ENCODE measurements at regions of chr4 and their contacts with region 1.

Region 1: DNA sequence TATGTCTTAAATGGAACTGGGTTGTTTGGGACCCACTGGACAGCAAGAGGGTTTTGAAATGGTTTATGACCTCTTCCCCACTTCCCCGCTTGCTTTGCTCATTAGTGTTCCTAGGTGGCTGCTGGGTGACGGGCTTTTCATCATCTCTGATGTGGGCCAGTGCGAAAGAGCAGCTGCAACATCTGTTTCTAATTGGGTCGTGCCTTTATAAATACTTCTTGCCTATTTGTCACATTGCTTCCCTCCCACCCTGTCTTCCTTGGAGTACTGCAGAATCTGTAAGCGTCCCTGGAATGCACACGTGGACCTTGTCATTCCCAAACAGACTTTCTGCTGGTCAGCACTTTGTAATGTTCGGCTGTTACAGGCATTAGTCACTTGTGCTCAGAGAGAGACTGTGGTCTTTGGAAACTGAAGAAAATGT is 35.2 kb downstream of the SEPTIN11 start:
- DNase-seq: no peak
- H3K4me3 Mint-ChIP-seq: no peak overlapping the region
- H3K27ac Mint-ChIP-seq: no peak overlapping the region
- H3K4me1 Mint-ChIP-seq: peaks cover 42% of the 10 kb centered on the region
- H3K27me3 Mint-ChIP-seq: peaks cover 72% of the 10 kb centered on the region

Region 2: GRCh38 chr4:76949276-76950051 is 35.3 kb before region 1 on chr4 and contains the start of gene SEPTIN11:
- intact Hi-C with region 1: loop called (anchors 5 kb)
- DNase-seq: peak; percentile 42
- H3K4me3 Mint-ChIP-seq: peak within 1 kb of the TSS; percentile 70
- H3K27ac Mint-ChIP-seq: no peak within 1 kb of the TSS
- H3K4me1 Mint-ChIP-seq: peaks cover 8% of the 10 kb centered on the region
- H3K27me3 Mint-ChIP-seq: peaks cover 79% of the 10 kb centered on the region
- total RNA-seq, gene SEPTIN11: 7.9 and 9.2 TPM in 2 replicates

Region 3: DNA sequence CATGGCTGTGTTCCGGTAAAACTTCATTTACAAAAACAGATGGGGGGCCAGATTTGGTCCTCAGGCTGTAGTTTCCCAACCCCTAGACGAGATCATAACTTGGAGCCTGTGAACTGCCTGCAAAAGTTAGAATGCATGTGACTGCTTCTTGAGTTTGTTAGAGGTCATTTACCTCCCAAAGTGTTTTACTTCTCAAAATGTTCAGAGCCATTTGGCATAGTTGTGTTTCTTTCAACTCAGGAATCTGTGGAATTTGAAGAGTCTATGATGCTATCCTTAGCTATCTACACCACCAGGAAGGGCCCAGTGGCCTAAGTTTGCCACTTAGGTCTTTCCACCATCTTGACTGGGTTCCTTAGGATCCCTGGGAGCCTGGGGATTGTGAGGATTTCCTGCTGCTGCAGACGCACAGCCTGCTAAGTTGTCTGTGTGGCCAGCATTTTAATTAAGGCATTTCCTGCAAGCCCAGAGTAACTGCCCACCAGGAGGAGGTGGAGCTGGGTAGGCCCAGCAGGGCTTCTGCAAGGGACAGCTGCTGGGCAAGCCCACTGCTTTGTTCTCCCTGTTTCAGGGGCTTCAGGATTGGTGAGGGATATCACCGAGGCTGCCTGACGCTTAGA is 37.9 kb after region 1 on chr4:
- intact Hi-C with region 1: loop called (anchors 1 kb)
- DNase-seq: no peak
- H3K4me3 Mint-ChIP-seq: no peak overlapping the region
- H3K27ac Mint-ChIP-seq: no peak overlapping the region
- H3K4me1 Mint-ChIP-seq: peaks cover 23% of the 10 kb centered on the region
- H3K27me3 Mint-ChIP-seq: peaks cover 43% of the 10 kb centered on the region

Region 4: DNA sequence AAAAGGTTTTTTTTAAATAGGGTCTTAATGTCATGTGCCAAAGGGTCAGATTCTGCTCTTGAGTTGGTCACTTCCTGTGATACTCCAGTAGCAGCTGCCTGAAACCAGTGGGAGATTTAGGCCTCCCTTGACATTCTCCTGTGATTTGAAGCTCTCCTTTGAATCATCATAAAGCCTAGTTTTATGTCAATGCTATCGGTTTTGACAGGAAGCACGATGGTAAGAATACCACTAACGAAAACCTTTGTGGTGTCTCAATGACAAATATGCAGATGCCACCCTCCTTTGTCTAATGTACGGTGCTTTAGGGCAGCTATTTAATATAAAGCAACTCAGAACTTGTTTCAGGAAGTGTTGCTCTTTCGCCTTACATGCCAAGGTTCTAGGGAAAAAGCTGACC is 46.7 kb after region 1 on chr4:
- intact Hi-C with region 1: loop called (anchors 1 kb)
- DNase-seq: no peak
- H3K4me3 Mint-ChIP-seq: no peak overlapping the region
- H3K27ac Mint-ChIP-seq: no peak overlapping the region
- H3K4me1 Mint-ChIP-seq: peaks cover 40% of the 10 kb centered on the region
- H3K27me3 Mint-ChIP-seq: peaks cover 47% of the 10 kb centered on the region

Region 5: DNA sequence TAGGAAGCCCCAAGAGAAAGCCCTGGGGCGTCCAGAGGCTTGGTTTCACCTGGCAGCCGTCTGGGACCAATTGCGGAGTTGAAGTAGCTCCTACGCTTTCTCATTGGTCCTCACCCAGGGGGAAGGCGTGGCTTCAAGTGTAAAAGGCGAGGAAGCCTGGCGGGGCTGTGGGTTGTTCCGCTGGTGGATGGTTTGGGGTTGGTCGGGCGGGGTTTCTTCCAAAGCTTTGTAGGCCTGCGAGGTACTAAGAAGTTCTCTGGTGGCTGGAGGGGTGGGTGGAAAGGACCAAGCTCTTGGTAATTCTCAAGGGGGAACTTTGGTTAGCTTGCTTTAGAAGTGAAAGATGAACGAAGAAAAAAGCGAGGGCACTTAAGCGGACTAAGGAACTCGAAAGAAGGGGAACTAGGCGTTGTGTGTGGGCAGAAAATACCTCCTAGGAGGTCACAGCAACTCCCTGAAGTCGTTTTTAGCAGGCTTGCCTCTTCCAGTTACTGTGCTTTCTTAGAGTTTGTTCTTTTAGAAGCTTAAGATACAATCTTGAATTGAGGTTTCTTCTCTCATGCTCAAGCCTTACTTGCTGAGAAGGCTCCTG is 208.8 kb after region 1 on chr4:
- intact Hi-C with region 1: loop called (anchors 5 kb)
- DNase-seq: peak; percentile 77
- H3K4me3 Mint-ChIP-seq: peak overlapping the region; percentile 81
- H3K27ac Mint-ChIP-seq: peak overlapping the region; percentile 97
- H3K4me1 Mint-ChIP-seq: peaks cover 47% of the 10 kb centered on the region
- H3K27me3 Mint-ChIP-seq: peaks cover 3% of the 10 kb centered on the region

Measured in activated T-helper 2 cell treated with anti-CD3 and anti-CD28 coated beads, Interferon-gamma antibody, Interleukin-2, Interleukin-4, amounts not matched to agents 10 μg/mL and 5 μg/mL and 100 μg/mL, durations not matched to agents 14 hours and 24 hours and 36 hours (primary cell).